GM12878 (cell line): ENCODE measurements at regions of chr9 and their contacts with region 1.

Region 1: DNA sequence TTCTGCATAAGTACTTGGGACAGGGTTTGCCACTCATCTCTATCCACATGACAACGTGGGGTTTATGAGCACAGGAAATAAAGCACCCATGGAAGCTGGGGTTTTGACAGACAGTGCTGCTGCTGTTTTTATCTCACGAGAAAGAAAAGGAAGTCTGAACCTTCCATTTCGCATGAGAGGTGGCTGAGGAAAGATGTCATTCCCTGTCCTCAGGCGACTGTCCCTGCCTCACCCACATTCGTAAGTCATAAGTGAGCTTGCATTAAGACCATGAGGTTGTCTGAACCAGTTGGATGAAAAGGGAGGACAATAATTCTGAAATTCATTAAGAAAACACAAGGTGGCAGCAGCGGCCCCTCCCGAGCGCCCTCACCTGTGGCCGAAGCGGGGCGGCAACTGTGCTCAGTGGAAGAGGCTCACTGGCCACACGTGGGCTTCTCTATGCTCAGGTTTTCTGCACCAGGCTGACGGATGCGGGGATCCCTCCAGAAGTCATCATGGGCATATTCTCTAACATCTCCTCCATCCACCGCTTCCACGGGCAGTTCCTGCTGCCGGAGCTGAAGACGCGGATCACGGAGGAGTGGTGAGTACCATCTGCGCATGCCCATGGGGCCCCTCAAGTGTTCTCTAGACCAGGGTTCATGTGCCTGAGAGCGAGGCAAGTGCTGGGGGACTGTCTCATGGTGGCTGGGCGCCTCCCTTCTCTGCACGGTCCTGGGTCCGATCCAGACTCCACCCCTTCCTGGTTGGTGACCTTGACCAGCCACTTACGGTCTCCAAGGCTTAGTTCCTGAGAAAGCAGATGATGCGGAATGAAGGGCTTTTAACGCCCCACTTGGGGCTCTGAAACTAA is 54.7 kb upstream of the SUSD3 start:
- DNase-seq: peak; percentile 12
- ATAC-seq: peak; percentile 99
- H3K4me3 ChIP-seq: no peak overlapping the region
- H3K27ac ChIP-seq: no peak overlapping the region
- H3K4me1 ChIP-seq: no peaks in the 10 kb centered on the region
- H3K27me3 ChIP-seq: no peaks in the 10 kb centered on the region
- CTCF ChIP-seq: peak; percentile 66 to 85 (median 69)
- EP300 ChIP-seq: no peak
- POLR2A ChIP-seq: no peak
- RAD21 ChIP-seq: peak; percentile 80

Region 2: DNA sequence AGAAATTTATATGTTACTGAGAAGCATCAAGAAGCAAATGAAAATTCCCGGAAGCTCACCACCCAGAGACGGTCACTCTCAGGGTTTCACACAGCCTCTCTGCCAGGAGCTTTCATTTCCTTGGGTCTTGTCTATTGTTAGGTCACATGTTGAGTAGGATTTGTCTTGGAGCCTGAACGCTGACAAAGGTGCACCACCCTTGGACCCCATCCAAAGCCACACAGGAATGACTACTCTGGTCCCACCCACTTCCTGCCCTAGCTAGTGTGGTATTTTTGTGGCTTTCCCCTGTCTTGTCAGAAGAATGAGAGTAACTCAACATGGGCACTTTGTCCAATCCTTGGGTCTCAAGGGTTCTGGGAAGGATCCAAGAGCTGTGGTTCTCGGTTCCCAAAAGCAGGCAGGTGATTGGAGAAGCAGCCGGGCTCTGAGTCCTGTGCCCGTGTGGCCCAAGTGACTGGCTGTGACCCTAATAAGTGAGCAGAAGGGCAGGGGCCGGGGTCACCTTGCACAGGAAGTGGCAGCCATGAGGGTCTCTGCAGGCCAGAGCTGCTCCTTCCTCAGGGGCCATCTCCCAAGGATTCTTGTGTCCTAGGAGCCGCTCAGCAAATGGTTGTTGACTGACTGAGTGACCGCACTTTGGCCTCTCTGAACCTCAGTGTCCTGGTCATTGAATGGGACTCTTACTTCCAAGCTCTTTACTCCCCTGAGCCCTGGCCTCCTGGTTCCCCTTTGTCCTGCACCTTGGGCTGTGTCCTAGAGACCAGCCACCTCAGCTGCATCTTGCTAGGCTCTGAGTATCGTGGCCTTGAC is 49.5 kb before region 1 on chr9:
- CTCF ChIA-PET with region 1: interaction called, 100 read pairs
- POLR2A ChIA-PET with region 1: interaction called, 3 read pairs
- RAD21 ChIA-PET with region 1: interaction called, 20 read pairs
- SMC1A ChIA-PET with region 1: interaction called, 17 read pairs
- in situ Hi-C with region 1: no loop called
- intact Hi-C with region 1: no loop called
- DNase-seq: peak; percentile 61
- ATAC-seq: peak; percentile 79
- H3K4me3 ChIP-seq: peak overlapping the region; percentile 3; the same call in 1 of the 2 replicates
- H3K27ac ChIP-seq: 0 out of 2 replicates have a peak overlapping the region, but pooled peaks have one; percentile 9
- H3K4me1 ChIP-seq: peaks cover 13% of the 10 kb centered on the region
- H3K27me3 ChIP-seq: peaks cover 1 to 5% of the 10 kb centered on the region in 2 experiments; a peak in 3 of 4 replicates
- CTCF ChIP-seq: no peak
- EP300 ChIP-seq: no peak
- POLR2A ChIP-seq: no peak
- RAD21 ChIP-seq: no peak

Region 3: GRCh38 chr9:92992549-92992948 is 11.2 kb before region 1 on chr9:
- CTCF ChIA-PET with region 1: interaction called, 38 read pairs
- POLR2A ChIA-PET with region 1: no interaction called
- RAD21 ChIA-PET with region 1: interaction called, 4 read pairs
- SMC1A ChIA-PET with region 1: interaction called, 15 read pairs
- in situ Hi-C with region 1: no loop called
- intact Hi-C with region 1: no loop called
- DNase-seq: no peak
- ATAC-seq: no peak
- H3K4me3 ChIP-seq: no peak overlapping the region
- H3K27ac ChIP-seq: no peak overlapping the region
- H3K4me1 ChIP-seq: no peaks in the 10 kb centered on the region
- H3K27me3 ChIP-seq: no peaks in the 10 kb centered on the region
- CTCF ChIP-seq: no peak
- EP300 ChIP-seq: no peak
- POLR2A ChIP-seq: no peak
- RAD21 ChIP-seq: no peak

Region 4: GRCh38 chr9:93028448-93029006 is 24.7 kb after region 1 on chr9:
- CTCF ChIA-PET with region 1: interaction called, 16 read pairs
- POLR2A ChIA-PET with region 1: no interaction called
- RAD21 ChIA-PET with region 1: interaction called, 15 read pairs
- SMC1A ChIA-PET with region 1: interaction called, 4 read pairs
- in situ Hi-C with region 1: no loop called
- intact Hi-C with region 1: no loop called
- DNase-seq: peak; percentile 59
- ATAC-seq: peak; percentile 86
- H3K4me3 ChIP-seq: no peak overlapping the region
- H3K27ac ChIP-seq: peak overlapping the region; percentile 58
- H3K4me1 ChIP-seq: peaks cover 16% of the 10 kb centered on the region
- H3K27me3 ChIP-seq: no peaks in the 10 kb centered on the region
- CTCF ChIP-seq: no peak
- EP300 ChIP-seq: no peak
- POLR2A ChIP-seq: no peak
- RAD21 ChIP-seq: no peak

Region 5: GRCh38 chr9:93058355-93059096 is 54.7 kb after region 1 on chr9 and contains the start of gene SUSD3:
- CTCF ChIA-PET with region 1: interaction called, 31 read pairs
- POLR2A ChIA-PET with region 1: no interaction called
- RAD21 ChIA-PET with region 1: interaction called, 22 read pairs
- SMC1A ChIA-PET with region 1: interaction called, 11 read pairs
- in situ Hi-C with region 1: no loop called
- intact Hi-C with region 1: loop called (anchors 5 kb)
- DNase-seq: peak; percentile 60
- ATAC-seq: peak; percentile 77
- H3K4me3 ChIP-seq: peak within 1 kb of the TSS; percentile 81
- H3K27ac ChIP-seq: peak within 1 kb of the TSS; percentile 88
- H3K4me1 ChIP-seq: peaks cover 49% of the 10 kb centered on the region
- H3K27me3 ChIP-seq: no peaks in the 10 kb centered on the region
- CTCF ChIP-seq: no peak
- EP300 ChIP-seq: peak in 1 of 2 experiments; percentile 42; a peak in 2 of 4 replicates
- POLR2A ChIP-seq: peak; percentile 64
- RAD21 ChIP-seq: no peak
- polyA plus RNA-seq, gene SUSD3: 2.5 to 15.1 TPM

Region 6: DNA sequence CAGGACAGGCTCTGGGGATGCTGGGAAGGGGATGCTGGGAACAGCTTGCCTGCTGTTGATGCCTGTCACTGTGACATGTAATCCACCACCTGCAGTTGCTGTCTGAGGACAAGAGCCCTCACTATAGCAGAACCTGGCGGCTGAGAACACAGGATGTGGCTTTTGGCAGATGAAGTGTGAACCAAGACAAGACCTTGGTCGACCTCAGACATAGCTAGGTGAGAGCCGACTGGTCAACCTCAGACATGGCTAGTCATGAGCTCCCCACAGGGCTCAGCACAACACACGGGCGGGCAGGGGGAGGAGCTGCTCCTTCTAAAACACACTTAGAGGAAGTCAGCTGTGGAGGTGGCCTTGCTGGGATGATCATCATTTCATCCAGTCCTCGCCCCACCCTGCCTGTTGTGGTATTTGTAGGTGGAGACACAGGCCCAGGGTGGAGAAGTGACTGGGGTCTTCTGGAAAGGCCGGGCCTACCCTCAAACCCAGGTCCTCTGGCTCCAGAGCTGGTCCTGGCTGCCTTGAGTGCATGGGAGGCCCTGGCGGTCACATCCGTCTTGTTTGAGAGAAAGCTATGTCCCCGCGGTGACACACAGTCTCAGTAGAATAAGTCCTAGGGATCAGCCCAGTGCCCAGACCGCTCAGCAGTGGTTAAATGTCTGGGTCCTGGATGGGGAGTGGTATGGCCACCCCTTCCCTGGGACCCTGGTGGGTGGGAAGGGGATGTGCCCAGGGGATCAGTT is 60.8 kb after region 1 on chr9:
- CTCF ChIA-PET with region 1: interaction called, 31 read pairs
- POLR2A ChIA-PET with region 1: interaction called, 3 read pairs
- RAD21 ChIA-PET with region 1: interaction called, 22 read pairs
- SMC1A ChIA-PET with region 1: interaction called, 11 read pairs
- in situ Hi-C with region 1: no loop called
- intact Hi-C with region 1: loop called (anchors 5 kb)
- DNase-seq: peak; percentile 94
- ATAC-seq: peak; percentile 86
- H3K4me3 ChIP-seq: peak overlapping the region; percentile 65
- H3K27ac ChIP-seq: peak overlapping the region; percentile 88
- H3K4me1 ChIP-seq: peaks cover 54% of the 10 kb centered on the region
- H3K27me3 ChIP-seq: no peaks in the 10 kb centered on the region
- CTCF ChIP-seq: no peak
- EP300 ChIP-seq: peak; percentile 87 to 88
- POLR2A ChIP-seq: peak; percentile 84
- RAD21 ChIP-seq: no peak; the same call in 1 of the 2 replicates

Region 7: GRCh38 chr9:93095205-93096130 is 91.7 kb after region 1 on chr9:
- CTCF ChIA-PET with region 1: interaction called, 6 read pairs
- POLR2A ChIA-PET with region 1: interaction called, 3 read pairs
- RAD21 ChIA-PET with region 1: interaction called, 12 read pairs
- SMC1A ChIA-PET with region 1: interaction called, 5 read pairs
- in situ Hi-C with region 1: no loop called
- intact Hi-C with region 1: loop called (anchors 5 kb)
- DNase-seq: peak; percentile 85
- ATAC-seq: peak; percentile 81
- H3K4me3 ChIP-seq: peak overlapping the region; percentile 54
- H3K27ac ChIP-seq: peak overlapping the region; percentile 99
- H3K4me1 ChIP-seq: peaks cover 61% of the 10 kb centered on the region
- H3K27me3 ChIP-seq: no peaks in the 10 kb centered on the region
- CTCF ChIP-seq: no peak
- EP300 ChIP-seq: no peak
- POLR2A ChIP-seq: peak; percentile 78
- RAD21 ChIP-seq: no peak

Region 8: GRCh38 chr9:93173365-93174051 is 169.7 kb after region 1 on chr9:
- CTCF ChIA-PET with region 1: no interaction called
- POLR2A ChIA-PET with region 1: no interaction called
- RAD21 ChIA-PET with region 1: no interaction called
- SMC1A ChIA-PET with region 1: no interaction called
- in situ Hi-C with region 1: no loop called
- intact Hi-C with region 1: no loop called
- DNase-seq: no peak
- ATAC-seq: no peak
- H3K4me3 ChIP-seq: no peak overlapping the region
- H3K27ac ChIP-seq: no peak overlapping the region
- H3K4me1 ChIP-seq: no peaks in the 10 kb centered on the region
- H3K27me3 ChIP-seq: peaks cover 2 to 6% of the 10 kb centered on the region in 2 experiments; a peak in 2 of 4 replicates
- CTCF ChIP-seq: no peak
- EP300 ChIP-seq: no peak
- POLR2A ChIP-seq: no peak
- RAD21 ChIP-seq: no peak